CD4-positive, alpha-beta T cell (primary cell): ENCODE measurements at regions of chr1 and their contacts with region 1.

Region 1: GRCh38 chr1:185281245-185281644 is 35.8 kb downstream of the IVNS1ABP start:
- DNase-seq: peak in 13 of 14 experiments; percentile 10 to 78 (median 25)
- ATAC-seq: peak; percentile 96
- H3K4me3 ChIP-seq: no peak overlapping the region
- H3K4me3 Mint-ChIP-seq: peak overlapping the region; percentile 83
- H3K27ac ChIP-seq: peak overlapping the region; percentile 58 to 62
- H3K27ac Mint-ChIP-seq: peak overlapping the region; percentile 91
- H3K4me1 ChIP-seq: peaks cover 45% of the 10 kb centered on the region
- H3K4me1 Mint-ChIP-seq: peaks cover 67% of the 10 kb centered on the region
- H3K27me3 ChIP-seq: no peaks in the 10 kb centered on the region
- H3K27me3 Mint-ChIP-seq: no peaks in the 10 kb centered on the region
- CTCF ChIP-seq: no peak

Region 2: DNA sequence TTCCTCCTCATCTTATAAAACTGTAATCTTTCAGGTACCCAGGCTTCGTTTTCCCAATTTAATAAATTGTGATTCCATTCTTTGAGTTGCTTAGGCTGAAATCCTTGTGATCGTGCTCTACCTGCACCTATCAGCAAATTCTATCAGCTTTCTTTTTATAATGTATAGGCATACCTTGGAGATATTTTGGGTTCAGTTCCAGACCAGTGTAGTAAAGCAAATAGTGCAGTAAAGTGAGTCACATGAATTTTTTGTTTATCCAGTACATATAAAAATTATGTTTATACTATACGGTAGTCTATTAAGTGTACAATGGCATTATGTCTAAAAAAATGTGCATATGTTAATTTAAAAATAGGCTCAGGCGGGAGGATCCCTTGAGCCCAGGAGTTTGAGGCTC is 118.8 kb before region 1 on chr1:
- CTCF ChIA-PET with region 1: no interaction called
- POLR2A ChIA-PET with region 1: no interaction called
- intact Hi-C with region 1: no loop called
- DNase-seq: no peak
- ATAC-seq: no peak
- H3K4me3 ChIP-seq: no peak overlapping the region
- H3K4me3 Mint-ChIP-seq: no peak overlapping the region
- H3K27ac ChIP-seq: no peak overlapping the region
- H3K27ac Mint-ChIP-seq: no peak overlapping the region
- H3K4me1 ChIP-seq: peaks cover 5% of the 10 kb centered on the region
- H3K4me1 Mint-ChIP-seq: peaks cover 21% of the 10 kb centered on the region
- H3K27me3 ChIP-seq: no peaks in the 10 kb centered on the region
- H3K27me3 Mint-ChIP-seq: no peaks in the 10 kb centered on the region
- CTCF ChIP-seq: no peak

Region 3: GRCh38 chr1:185244015-185244747 is 37.1 kb before region 1 on chr1:
- CTCF ChIA-PET with region 1: interaction called, 4 read pairs
- POLR2A ChIA-PET with region 1: interaction called, 31 read pairs
- intact Hi-C with region 1: loop called in 1 of 2 experiments (anchors 5 kb)
- DNase-seq: peak in 8 of 14 experiments; percentile 19 to 59 (median 26)
- ATAC-seq: no peak
- H3K4me3 ChIP-seq: no peak overlapping the region
- H3K4me3 Mint-ChIP-seq: no peak overlapping the region
- H3K27ac ChIP-seq: no peak overlapping the region
- H3K27ac Mint-ChIP-seq: no peak overlapping the region
- H3K4me1 ChIP-seq: no peaks in the 10 kb centered on the region
- H3K4me1 Mint-ChIP-seq: peaks cover 39% of the 10 kb centered on the region
- H3K27me3 ChIP-seq: no peaks in the 10 kb centered on the region
- H3K27me3 Mint-ChIP-seq: no peaks in the 10 kb centered on the region
- CTCF ChIP-seq: no peak

Region 4: DNA sequence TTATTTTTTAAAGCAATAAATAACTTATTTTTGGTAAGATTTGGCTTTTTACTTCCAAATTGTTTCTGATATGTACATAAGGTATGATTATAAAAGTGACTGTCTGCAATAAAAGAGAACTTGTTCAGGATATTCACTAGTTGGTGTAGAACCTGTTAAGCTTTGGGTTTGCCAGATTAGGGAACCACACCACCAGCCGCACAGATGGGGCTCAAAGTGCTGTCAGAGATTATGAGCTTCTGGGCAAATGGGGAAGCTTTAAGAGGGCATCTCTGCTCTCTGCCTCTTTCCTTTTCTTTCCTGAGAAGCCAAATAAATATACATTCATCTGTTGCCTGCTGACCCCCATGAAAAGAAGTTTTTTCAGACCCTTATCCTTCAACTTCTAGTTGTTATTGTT is 10.4 kb after region 1 on chr1:
- CTCF ChIA-PET with region 1: interaction called, 8 read pairs
- POLR2A ChIA-PET with region 1: interaction called, 36 read pairs
- intact Hi-C with region 1: no loop called
- DNase-seq: no peak
- ATAC-seq: no peak
- H3K4me3 ChIP-seq: no peak overlapping the region
- H3K4me3 Mint-ChIP-seq: no peak overlapping the region
- H3K27ac ChIP-seq: no peak overlapping the region
- H3K27ac Mint-ChIP-seq: no peak overlapping the region
- H3K4me1 ChIP-seq: no peaks in the 10 kb centered on the region
- H3K4me1 Mint-ChIP-seq: peaks cover 40% of the 10 kb centered on the region
- H3K27me3 ChIP-seq: no peaks in the 10 kb centered on the region
- H3K27me3 Mint-ChIP-seq: no peaks in the 10 kb centered on the region
- CTCF ChIP-seq: no peak

Region 5: GRCh38 chr1:185309566-185309965 is 28.3 kb after region 1 on chr1:
- CTCF ChIA-PET with region 1: interaction called, 4 read pairs
- POLR2A ChIA-PET with region 1: interaction called, 14 read pairs
- intact Hi-C with region 1: loop called in 1 of 2 experiments (anchors 1 kb)
- DNase-seq: no peak
- ATAC-seq: no peak
- H3K4me3 ChIP-seq: no peak overlapping the region
- H3K4me3 Mint-ChIP-seq: no peak overlapping the region
- H3K27ac ChIP-seq: no peak overlapping the region
- H3K27ac Mint-ChIP-seq: no peak overlapping the region
- H3K4me1 ChIP-seq: peaks cover 4% of the 10 kb centered on the region
- H3K4me1 Mint-ChIP-seq: peaks cover 49% of the 10 kb centered on the region
- H3K27me3 ChIP-seq: no peaks in the 10 kb centered on the region
- H3K27me3 Mint-ChIP-seq: no peaks in the 10 kb centered on the region
- CTCF ChIP-seq: no peak